PC-9 (cell line): ENCODE measurements at regions of chr1 and their contacts with region 1.

Region 1: GRCh38 chr1:35691080-35691479 is 27.6 kb downstream of the C1orf216 start:
- DNase-seq: no peak
- H3K4me3 ChIP-seq: no peak overlapping the region
- H3K27ac ChIP-seq: no peak overlapping the region
- H3K4me1 ChIP-seq: no peaks in the 10 kb centered on the region
- H3K27me3 ChIP-seq: peaks cover 97% of the 10 kb centered on the region
- CTCF ChIP-seq: no peak

Region 2: GRCh38 chr1:35707601-35708440 is 16.7 kb after region 1 on chr1:
- CTCF ChIA-PET with region 1: no interaction called
- POLR2A ChIA-PET with region 1: no interaction called
- intact Hi-C with region 1: no loop called
- DNase-seq: peak in 1 of 2 experiments; percentile 47
- H3K4me3 ChIP-seq: peak overlapping the region; percentile 42; the same call in 1 of the 2 replicates
- H3K27ac ChIP-seq: no peak overlapping the region
- H3K4me1 ChIP-seq: no peaks in the 10 kb centered on the region
- H3K27me3 ChIP-seq: peaks cover 44% of the 10 kb centered on the region
- CTCF ChIP-seq: no peak

Region 3: GRCh38 chr1:35850051-35850450 is 159.0 kb after region 1 on chr1:
- CTCF ChIA-PET with region 1: interaction called, 10 read pairs
- POLR2A ChIA-PET with region 1: no interaction called
- intact Hi-C with region 1: no loop called
- DNase-seq: no peak
- H3K4me3 ChIP-seq: no peak overlapping the region
- H3K27ac ChIP-seq: no peak overlapping the region
- H3K4me1 ChIP-seq: no peaks in the 10 kb centered on the region
- H3K27me3 ChIP-seq: no peaks in the 10 kb centered on the region
- CTCF ChIP-seq: no peak